GM13977 (cell line): ENCODE measurements at regions of chr12 and their contacts with region 1.

Region 1: GRCh38 chr12:90987520-90987919 is 17.3 kb downstream of the EPYC start:
- DNase-seq: no peak
- CTCF ChIP-seq: no peak

Region 2: DNA sequence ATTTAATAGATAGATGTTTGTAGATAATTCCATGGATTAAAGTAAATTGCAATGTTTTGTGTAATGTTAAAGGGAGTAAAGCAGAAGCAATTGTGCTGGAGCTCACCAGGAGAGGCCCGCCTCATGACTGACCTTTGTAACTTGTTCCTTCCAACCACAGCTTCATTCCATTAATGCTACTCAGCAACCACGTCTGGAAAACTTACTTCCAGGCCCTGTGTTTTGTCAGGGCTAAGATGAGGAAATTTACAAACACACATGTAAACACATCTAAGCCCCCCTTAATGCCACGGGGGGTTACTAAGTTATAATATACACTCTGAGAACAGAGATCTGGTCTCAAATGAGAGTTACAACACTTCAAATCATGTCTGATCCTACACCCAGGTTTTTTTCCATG is 111.4 kb after region 1 on chr12:
- in situ Hi-C with region 1: loop called (anchors 10 kb)
- DNase-seq: no peak
- CTCF ChIP-seq: no peak